Posterior vena cava (tissue), 2 donors: ENCODE measurements at regions of chr7 and their contacts with region 1.

Region 1: DNA sequence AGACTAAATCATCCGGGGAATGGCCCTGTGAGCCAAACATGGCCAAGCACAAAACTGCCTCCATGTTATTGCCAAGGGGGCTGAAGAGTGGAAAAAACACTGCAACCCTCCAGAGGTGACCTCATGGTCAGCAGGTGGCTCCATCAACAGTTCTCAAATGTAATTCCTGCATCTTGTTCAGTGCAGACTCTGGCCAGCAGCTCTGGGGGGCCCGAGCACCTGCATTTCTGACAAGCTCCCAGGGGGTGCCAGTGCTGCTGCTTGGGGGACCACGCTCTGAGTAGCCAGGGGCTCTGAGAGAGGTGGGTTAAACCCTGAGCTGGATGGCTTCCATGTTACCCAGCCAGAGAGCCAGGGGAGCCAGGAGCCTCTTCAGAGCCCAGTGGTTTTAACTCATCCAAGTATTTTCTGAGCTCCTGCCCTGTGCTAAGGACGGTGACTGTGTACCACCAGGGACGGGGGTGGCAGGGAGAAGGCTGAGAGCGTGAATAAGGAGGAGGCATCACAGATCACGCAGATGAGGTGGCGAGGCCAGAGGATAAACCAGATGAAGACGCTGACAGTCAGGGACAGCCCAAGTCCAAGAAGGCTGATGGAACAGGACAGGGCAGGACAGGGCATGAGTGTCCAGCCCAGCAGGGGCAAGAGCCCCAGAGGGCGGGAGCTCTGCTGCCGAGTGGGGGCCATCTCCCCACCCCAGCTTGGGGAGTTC is 52.9 kb downstream of the CLEC2L start:
- DNase-seq: no peak

Region 2: DNA sequence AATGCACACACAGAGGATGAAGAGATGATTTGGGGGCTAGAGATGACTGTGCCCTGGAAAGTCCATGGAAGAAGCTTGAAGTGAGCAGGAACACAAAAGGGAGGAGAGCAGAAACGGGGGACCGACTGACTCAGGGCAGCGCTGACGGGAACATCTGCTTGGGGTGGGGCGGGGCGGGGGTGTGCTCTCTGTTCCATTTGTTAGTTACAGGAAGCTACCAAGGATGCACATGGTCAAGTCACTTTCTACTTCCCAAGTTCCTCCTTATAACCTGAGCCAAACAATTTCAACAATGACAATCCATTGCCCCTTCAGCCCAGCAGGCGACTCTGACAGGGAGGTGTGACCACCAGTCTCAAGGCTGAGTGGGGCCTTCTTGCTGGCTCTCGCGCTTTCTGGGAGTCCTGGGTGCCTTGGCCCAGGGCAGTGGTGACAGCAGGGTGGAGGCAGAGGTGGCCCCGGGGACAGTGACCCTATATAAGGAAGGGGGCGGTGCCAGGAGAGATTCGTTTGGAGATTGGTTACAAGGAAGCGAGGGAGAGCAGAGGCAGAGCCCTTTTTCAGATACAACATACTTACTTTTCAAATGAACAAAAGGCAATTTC is 13.3 kb before region 1 on chr7:
- intact Hi-C with region 1: loop called in 1 of 2 experiments (anchors 1 kb)
- DNase-seq: no peak

Region 3: GRCh38 chr7:140867467-140868462 is 1291.4 kb after region 1 on chr7:
- intact Hi-C with region 1: no loop called
- DNase-seq: no peak